ENCODE measurements at regions of chr6 and their contacts with region 1.

Region 1: DNA sequence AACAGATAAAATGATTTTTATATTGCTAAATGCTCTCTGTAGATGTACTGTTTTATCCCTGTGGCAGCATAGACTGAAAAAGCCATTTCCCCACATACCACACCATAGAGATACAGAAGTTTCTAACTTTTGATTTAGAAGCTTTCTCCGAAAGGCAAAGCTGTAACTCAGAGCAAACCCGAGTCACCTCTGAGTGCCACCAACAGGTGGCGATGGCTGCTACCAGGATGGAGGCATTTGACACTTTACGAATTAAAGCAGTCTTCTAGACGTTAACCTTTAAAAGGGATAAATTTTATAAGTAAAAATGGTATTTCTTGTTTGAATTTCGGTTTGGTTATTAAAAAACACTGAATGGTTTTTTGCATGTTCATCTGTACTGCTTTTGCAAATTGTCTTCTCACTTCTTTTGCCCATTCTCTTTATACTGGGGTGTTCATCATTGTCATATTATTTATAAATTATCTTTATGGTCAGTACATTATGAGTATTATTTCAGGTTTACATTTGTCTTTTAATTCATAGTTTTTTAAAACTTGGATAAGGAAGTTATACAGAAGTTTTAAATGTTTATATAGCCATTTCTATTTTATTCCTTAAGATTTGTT is 201.0 kb upstream of the CEP162 start:
- DNase-seq: peak; percentile 71
- H3K4me3 Mint-ChIP-seq: no peak overlapping the region
- H3K27ac Mint-ChIP-seq: no peak overlapping the region
- H3K4me1 Mint-ChIP-seq: peaks cover 9% of the 10 kb centered on the region
- H3K27me3 Mint-ChIP-seq: no peaks in the 10 kb centered on the region
- CTCF ChIP-seq: peak; percentile 78

Region 2: DNA sequence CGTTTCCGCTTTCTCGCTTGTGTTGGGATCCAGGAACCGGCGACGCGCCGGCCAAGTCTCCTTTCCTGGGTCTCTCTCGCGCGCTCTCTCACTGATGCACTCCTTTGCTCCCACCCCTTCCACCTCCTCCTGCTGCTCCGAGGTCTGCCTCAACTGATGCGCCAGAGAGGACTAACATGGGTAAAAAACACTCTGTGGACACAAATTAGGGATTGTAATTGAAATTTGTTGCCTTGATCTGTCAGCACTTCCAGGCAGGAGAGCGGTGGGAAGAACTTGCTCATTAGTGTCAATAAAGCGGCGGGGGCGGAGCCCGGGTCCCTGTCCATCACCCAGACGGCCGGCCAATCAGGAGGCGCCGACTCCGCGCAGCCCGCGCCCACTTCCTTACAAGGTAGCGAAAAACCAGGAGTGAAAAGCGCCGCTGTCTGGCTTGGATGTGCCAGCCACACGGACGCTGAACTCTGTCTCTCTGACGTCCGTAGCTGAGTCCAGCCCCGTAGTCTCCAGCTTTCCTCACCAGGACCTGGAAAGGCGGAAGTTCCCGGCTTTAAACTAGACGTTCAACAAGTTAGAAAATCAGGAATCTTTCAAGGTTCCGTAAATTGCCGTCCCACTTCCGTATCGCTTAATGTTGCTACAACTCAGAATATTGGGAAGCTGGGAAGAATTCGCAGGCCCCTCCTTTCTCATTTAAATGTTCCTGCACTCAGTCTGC is 336.1 kb after region 1 on chr6 and contains the start of gene TBX18:
- CTCF ChIA-PET with region 1: no interaction called
- intact Hi-C with region 1: loop called (anchors 5 kb)
- DNase-seq: peak; percentile 93
- H3K4me3 Mint-ChIP-seq: peak within 1 kb of the TSS; percentile 70
- H3K27ac Mint-ChIP-seq: peak within 1 kb of the TSS; percentile 92
- H3K4me1 Mint-ChIP-seq: peaks cover 14% of the 10 kb centered on the region
- H3K27me3 Mint-ChIP-seq: no peaks in the 10 kb centered on the region
- CTCF ChIP-seq: no peak
- total RNA-seq, gene TBX18: 48.5 and 49.2 TPM in 2 replicates

Region 3: DNA sequence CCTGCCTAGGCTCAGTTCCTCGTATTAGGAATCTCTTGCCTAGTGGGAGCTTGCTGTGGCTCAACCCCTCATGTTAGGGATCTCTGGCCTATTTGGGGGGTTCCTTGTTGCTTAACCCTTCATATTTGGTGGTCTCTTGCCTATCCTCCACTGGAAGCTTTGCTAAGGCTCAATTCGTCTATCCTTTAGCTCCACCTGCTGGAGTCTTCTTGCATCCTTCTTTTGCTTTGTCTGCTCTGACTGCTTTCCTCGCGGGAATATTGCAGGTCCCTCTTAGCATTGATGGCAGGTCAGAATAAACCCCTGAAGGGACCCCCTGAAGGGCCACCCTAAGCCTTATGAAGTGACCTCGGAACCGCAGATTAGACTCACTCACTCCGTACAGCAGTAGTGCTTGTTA is 539.0 kb after region 1 on chr6:
- CTCF ChIA-PET with region 1: no interaction called
- intact Hi-C with region 1: loop called (anchors 10 kb)
- DNase-seq: peak; percentile 9
- H3K4me3 Mint-ChIP-seq: no peak overlapping the region
- H3K27ac Mint-ChIP-seq: no peak overlapping the region
- H3K4me1 Mint-ChIP-seq: no peaks in the 10 kb centered on the region
- H3K27me3 Mint-ChIP-seq: peaks cover 27% of the 10 kb centered on the region
- CTCF ChIP-seq: peak; percentile 23